ENCODE measurements at regions of chr9 and their contacts with region 1.

Region 1: DNA sequence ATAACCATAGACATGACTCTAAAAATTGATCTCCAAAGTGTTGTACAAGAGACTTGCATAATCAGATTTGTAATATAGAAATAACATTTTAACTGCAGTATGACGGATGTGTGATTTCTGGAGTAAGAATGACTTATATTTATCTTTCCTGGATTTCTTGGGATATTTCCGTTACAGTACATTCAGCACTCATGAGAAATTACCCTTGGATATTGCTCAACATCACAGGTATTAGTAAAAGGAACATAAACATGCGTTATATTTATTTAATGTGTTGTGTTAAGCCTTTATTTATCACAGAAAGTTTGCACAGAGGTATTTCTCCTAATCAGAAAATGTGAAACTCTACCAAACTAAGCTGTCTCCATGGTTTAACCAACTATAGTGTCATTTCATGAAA is 1823.9 kb upstream of the C9orf72 start:
- DNase-seq: no peak
- ATAC-seq: no peak

Region 2: DNA sequence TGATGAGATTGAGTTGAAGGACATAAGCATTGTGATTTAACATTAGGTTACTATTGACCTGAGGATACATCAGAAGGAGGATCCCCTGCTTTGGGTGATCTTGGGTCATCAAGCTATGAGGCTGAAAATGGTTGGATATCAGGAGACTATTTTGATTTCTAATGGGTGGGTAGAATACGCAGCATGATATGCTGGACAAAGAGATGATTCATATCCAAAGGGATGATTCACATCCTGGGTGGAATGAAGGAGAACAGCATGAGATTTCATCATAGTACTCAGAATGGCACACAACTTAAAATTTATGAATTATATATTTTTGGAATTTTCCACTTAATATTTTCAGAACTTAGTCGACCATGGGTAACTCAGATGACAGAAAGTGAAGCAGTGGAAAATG is 64.4 kb before region 1 on chr9:
- intact Hi-C with region 1: no loop called
- DNase-seq: no peak
- ATAC-seq: no peak

Region 3: GRCh38 chr9:29456940-29457339 is 59.8 kb after region 1 on chr9:
- intact Hi-C with region 1: loop called in 1 of 2 experiments (anchors 10 kb)
- DNase-seq: no peak
- ATAC-seq: no peak

Measured in left colon (tissue), 2 donors.